Posterior cingulate gyrus (tissue), 11 donors: ENCODE measurements at regions of chr12 and their contacts with region 1.

Region 1: DNA sequence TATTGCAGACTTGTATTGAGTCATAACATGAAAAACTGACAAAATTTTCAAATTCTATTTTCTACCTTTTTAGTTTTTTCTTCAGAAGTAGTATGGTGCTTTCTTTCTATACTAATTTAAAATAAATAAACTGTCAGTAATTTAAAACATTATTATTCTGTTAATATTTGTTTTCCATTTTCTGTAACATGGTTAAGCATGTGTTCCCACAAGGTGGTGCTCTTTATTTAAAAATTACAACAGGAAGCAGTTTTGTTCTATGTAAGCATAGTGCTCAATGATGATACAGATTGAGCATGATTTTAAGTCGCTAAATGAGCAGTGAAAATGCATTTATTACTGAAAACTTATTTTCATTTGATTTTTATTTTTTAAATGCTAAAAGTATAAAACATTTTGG is 114.6 kb downstream of the PPFIA2 start:
- DNase-seq: no peak

Region 2: GRCh38 chr12:81683881-81684280 is 39.4 kb after region 1 on chr12:
- intact Hi-C with region 1: no loop called
- DNase-seq: no peak

Region 3: GRCh38 chr12:81759215-81760051 is 114.9 kb after region 1 on chr12 and contains the start of gene PPFIA2:
- intact Hi-C with region 1: loop called (anchors 10 kb)
- DNase-seq: peak; percentile 46 to 95 (median 62)

Region 4: GRCh38 chr12:81992461-81992860 is 348.0 kb after region 1 on chr12:
- intact Hi-C with region 1: loop called (anchors 5 kb)
- DNase-seq: peak in 3 of 10 donors; percentile 3 to 68 (median 11)

Region 5: GRCh38 chr12:82326905-82327503 is 682.5 kb after region 1 on chr12:
- intact Hi-C with region 1: loop called (anchors 1 kb)
- DNase-seq: no peak